ENCODE measurements at regions of chr10 and their contacts with region 1.

Region 1: DNA sequence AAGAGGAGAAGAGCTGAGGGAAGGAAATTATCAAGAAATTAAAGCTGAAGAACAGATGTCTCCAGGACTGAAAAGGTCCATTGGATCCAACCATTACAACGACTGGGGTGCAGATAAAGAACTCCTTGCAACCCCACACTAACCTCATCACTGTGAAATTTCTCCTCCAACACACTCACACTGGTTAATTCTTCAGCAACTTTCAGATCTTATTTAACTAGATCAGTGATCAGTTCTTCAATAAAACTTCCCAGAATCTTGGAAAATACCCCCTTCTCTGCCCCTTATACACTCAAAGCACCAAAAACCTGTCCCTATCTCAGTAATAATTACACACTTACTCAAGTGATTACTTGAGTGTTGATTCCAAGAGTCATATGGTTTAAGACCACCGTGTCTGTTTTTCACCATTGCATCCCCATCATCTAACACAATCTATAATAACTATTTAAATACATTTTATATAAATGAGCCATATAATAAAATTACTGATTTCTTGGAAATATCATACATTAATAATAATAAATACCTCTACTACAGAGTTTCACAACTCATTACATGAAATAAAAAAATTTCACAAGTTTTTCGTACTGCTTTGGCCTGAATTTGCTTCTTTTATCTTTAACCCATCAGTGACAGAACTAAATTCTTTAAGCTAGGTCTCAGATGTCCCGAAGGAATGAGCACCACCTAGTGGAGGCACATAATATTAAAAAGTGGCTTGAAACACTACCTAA is 123.7 kb downstream of the MPP7 start:
- DNase-seq: peak; percentile 51
- ATAC-seq: peak; percentile 28
- H3K4me3 Mint-ChIP-seq: peak overlapping the region; percentile 43
- H3K27ac Mint-ChIP-seq: peak overlapping the region; percentile 97
- H3K4me1 Mint-ChIP-seq: peaks cover 36% of the 10 kb centered on the region
- H3K27me3 Mint-ChIP-seq: no peaks in the 10 kb centered on the region

Region 2: DNA sequence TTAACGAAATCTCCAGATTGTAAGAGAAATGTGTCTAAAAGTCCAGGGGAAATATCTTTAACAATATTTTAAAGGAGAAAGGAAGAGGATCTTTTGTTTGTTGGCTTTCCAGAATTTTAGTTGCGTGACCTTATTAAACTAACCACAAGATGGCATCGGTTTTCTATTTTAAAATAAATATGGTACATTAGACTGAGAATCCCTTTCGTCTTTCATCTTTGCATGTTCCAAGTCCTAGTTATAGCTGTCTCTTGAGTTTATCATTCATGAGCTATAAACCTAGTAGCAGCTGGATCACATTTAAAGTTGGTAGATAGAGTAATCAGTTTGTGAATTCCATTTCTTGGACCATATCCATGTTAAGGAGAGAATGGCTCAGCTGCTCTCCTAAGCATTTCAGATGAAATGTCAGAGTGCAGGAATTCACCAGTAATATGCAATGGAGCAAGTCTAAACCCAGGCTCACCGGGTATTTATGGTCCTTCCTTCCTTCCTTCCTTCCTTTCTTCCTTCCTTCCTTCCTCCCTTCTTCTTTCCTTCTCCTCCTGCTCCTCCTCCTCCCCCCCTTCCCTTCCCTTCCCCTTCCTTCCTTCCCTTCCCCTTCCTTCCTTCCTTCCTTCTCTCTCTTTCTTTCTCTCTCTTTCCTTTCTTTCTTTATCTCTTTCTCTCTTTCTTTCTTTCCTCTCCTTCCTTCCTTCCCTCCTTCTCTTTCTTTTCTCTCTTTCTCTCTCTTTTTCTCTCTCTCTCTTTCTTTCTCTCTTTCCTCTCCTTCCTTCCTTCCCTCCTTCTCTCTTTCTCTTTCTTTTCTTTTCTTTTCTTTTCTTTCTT is 732.9 kb before region 1 on chr10:
- CTCF ChIA-PET with region 1: no interaction called
- POLR2A ChIA-PET with region 1: no interaction called
- intact Hi-C with region 1: loop called in 1 of 2 experiments (anchors 5 kb)
- DNase-seq: no peak
- ATAC-seq: no peak
- H3K4me3 Mint-ChIP-seq: no peak overlapping the region
- H3K27ac Mint-ChIP-seq: no peak overlapping the region
- H3K4me1 Mint-ChIP-seq: peaks cover 4% of the 10 kb centered on the region
- H3K27me3 Mint-ChIP-seq: no peaks in the 10 kb centered on the region

Region 3: DNA sequence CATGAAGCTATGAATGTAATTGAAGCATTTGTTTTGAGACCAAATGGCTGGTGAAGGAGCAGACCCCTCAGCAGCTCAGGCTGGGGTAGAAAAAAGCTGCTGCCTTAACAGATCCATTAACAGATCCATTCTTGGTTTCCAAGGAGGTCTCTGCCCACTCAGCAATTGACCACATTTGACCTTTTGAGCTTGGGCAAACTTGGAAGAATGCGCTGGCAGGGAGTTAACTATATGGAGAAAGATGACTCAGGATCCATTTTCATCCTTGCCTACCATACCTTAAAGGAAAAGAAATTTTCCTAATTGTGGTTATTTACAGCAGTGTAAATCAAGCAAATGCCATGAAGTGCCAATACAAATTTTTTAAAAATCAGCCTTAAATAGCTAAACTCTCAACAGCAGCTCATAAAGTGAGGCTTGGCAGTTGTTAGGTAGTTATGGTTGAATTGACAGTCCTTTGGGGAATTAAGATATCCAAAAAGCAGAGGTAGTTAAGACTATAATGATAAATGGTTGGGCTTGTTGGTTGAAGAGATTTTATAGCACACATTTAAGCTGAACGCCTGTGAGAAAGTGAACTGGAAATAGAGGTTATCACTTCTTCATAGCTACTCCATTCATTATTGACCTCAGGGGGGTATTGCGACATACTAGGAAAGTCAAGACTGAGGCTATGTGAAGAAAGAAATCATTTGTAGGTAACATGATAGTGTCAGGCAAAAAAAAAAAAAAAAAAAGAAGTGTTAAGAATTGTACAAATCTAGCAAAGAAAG is 517.5 kb before region 1 on chr10:
- CTCF ChIA-PET with region 1: no interaction called
- POLR2A ChIA-PET with region 1: no interaction called
- intact Hi-C with region 1: loop called in 1 of 2 experiments (anchors 5 kb)
- DNase-seq: no peak
- ATAC-seq: no peak
- H3K4me3 Mint-ChIP-seq: no peak overlapping the region
- H3K27ac Mint-ChIP-seq: no peak overlapping the region
- H3K4me1 Mint-ChIP-seq: no peaks in the 10 kb centered on the region
- H3K27me3 Mint-ChIP-seq: peaks cover 25% of the 10 kb centered on the region

Region 4: GRCh38 chr10:28087661-28088351 is 91.4 kb before region 1 on chr10:
- CTCF ChIA-PET with region 1: no interaction called
- POLR2A ChIA-PET with region 1: no interaction called
- intact Hi-C with region 1: loop called in 1 of 2 experiments (anchors 2 kb)
- DNase-seq: peak; percentile 22
- ATAC-seq: peak; percentile 90
- H3K4me3 Mint-ChIP-seq: no peak overlapping the region
- H3K27ac Mint-ChIP-seq: peak overlapping the region; percentile 95
- H3K4me1 Mint-ChIP-seq: peaks cover 18% of the 10 kb centered on the region
- H3K27me3 Mint-ChIP-seq: no peaks in the 10 kb centered on the region

Region 5: GRCh38 chr10:28250782-28251181 is 71.6 kb after region 1 on chr10:
- CTCF ChIA-PET with region 1: interaction called, 11 read pairs
- POLR2A ChIA-PET with region 1: no interaction called
- intact Hi-C with region 1: no loop called
- DNase-seq: no peak
- ATAC-seq: peak; percentile 47
- H3K4me3 Mint-ChIP-seq: no peak overlapping the region
- H3K27ac Mint-ChIP-seq: no peak overlapping the region
- H3K4me1 Mint-ChIP-seq: peaks cover 42% of the 10 kb centered on the region
- H3K27me3 Mint-ChIP-seq: no peaks in the 10 kb centered on the region

Region 6: GRCh38 chr10:28479425-28479865 is 300.3 kb after region 1 on chr10:
- CTCF ChIA-PET with region 1: no interaction called
- POLR2A ChIA-PET with region 1: no interaction called
- intact Hi-C with region 1: no loop called
- DNase-seq: no peak
- ATAC-seq: no peak
- H3K4me3 Mint-ChIP-seq: no peak overlapping the region
- H3K27ac Mint-ChIP-seq: no peak overlapping the region
- H3K4me1 Mint-ChIP-seq: no peaks in the 10 kb centered on the region
- H3K27me3 Mint-ChIP-seq: peaks cover 11% of the 10 kb centered on the region

Measured in activated CD4-positive, alpha-beta T cell treated with anti-CD3 and anti-CD28 coated beads for 36 hours (primary cell).